Lower leg skin (tissue), 4 donors: ENCODE measurements at regions of chrX and their contacts with region 1.

Region 1: GRCh38 chrX:55057675-55058249 is 17.1 kb upstream of the PAGE2B start:
- DNase-seq: peak in 1 of 2 donors; percentile 17
- H3K4me3 ChIP-seq: no peak overlapping the region
- CTCF ChIP-seq: no peak
- POLR2A ChIP-seq: no peak

Region 2: DNA sequence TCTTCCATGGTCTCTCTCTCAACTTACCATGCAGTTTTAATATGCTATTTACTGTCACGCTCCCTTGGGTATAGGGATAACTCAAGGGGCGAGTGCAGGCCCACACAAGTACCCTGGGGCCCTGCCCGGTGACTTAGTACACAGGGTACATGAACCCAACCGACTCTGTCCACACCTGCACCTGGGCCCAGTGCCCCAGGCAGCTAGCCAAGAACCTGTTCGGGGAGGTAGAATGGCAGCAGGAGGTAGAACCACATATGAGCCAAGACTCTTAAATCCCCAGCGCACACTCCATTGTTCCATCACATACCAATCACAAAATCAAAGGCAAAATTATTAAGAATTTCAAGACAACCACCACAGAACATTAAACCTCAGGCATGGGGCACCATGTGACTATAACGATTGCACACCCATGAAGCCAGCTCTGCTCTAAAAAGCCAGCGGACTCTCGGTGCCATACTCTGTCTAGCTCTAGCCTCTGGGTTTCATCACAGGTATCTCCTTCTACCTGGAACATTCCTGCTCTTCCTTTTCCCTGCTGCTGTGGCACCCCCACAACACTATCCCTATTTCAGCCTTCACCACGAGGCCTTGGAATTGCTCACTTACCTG is 1028.1 kb before region 1 on chrX:
- intact Hi-C with region 1: loop called (anchors 5 kb)
- DNase-seq: no peak
- H3K4me3 ChIP-seq: no peak overlapping the region
- CTCF ChIP-seq: no peak
- POLR2A ChIP-seq: no peak

Region 3: DNA sequence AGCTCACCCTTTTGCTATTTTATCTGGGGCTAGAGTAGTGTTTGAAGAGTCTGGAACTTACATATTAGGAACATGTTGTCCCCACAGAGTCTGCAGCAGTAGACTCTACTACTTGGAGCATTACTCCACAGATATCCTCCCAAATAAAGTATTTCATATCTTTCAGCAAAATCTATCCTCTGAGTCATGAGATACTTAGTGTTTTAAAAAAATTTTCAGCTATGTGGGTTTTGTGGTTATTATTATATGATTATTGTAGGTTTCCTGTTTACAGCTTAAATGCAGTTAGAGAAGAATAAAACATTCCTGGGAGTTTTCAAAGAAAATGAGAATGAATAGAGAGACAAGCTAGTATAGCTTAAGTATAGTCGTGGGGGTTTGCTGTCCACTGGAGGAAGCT is 62.0 kb after region 1 on chrX:
- intact Hi-C with region 1: no loop called
- DNase-seq: no peak
- H3K4me3 ChIP-seq: no peak overlapping the region
- CTCF ChIP-seq: no peak
- POLR2A ChIP-seq: no peak